ENCODE measurements at regions of chr18 and their contacts with region 1.

Region 1: DNA sequence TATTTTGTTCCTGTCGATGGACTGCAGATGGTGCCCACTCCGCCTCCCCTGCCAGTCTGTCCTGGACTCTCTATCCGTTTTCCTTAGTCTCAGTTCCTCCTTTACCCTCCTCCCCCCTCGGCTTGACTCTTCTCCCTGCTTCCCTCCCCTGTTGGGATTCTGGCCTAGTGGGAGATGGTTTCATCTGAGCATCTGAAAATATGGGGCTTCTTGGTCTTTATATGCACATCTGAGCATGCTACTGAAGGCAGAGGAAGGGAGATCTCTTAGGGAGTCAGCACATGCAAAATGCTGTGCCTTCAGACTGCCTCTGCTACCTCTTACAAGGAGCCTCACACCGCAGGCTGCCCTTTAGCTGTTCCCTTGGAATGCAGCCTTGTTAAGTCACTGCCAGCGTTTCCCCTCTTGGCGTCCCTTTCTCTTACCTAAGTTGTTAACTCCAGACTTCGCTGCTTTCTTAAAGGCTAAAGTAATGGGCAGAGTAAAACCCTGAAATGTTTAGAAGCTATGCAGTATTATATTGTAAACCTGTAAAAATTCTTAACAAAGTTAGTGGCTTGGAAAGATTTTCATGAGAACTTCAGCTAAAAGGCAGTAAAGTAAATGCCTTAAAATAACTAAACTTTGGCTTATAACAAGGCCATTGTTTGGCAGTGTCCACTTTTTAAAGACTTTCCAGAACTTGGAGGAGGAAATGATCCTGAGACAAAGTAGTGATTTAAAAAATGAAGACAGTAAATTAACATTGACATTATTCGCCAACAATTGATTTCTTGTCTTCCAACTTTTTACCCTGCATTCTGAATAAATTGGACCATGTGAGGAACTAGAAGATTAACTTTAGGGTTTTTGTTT is 49.8 kb downstream of the LDLRAD4 start:
- DNase-seq: no peak
- H3K4me3 Mint-ChIP-seq: peak overlapping the region; percentile 7
- H3K27ac Mint-ChIP-seq: peak overlapping the region; percentile 92
- H3K4me1 Mint-ChIP-seq: peaks cover 71% of the 10 kb centered on the region
- H3K27me3 Mint-ChIP-seq: peaks cover 12% of the 10 kb centered on the region

Region 2: DNA sequence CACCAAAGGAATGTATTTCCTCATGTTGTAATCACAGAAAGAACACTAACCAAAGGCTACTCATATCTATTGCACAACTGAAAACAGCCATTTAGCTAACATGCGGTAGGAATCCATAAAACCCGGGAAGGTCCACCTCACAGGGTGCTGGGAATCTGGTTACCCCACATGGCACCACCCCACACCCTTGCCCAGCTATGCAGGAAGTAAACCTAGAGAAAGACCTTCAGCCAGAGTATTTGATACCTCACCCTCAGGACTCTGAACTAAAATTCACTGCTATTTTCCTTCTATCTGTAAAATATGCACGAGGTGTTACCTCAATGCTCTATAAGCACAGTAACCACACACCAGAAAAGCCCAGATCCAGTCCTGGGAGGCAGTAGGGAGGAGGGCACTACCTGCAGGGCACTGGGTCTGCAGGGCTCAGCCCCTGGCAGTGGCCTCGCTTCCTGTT is 430.2 kb before region 1 on chr18:
- CTCF ChIA-PET with region 1: no interaction called
- POLR2A ChIA-PET with region 1: no interaction called
- intact Hi-C with region 1: loop called (anchors 5 kb)
- DNase-seq: peak; percentile 34
- H3K4me3 Mint-ChIP-seq: peak overlapping the region; percentile 45
- H3K27ac Mint-ChIP-seq: peak overlapping the region; percentile 94
- H3K4me1 Mint-ChIP-seq: peaks cover 63% of the 10 kb centered on the region
- H3K27me3 Mint-ChIP-seq: no peaks in the 10 kb centered on the region

Region 3: DNA sequence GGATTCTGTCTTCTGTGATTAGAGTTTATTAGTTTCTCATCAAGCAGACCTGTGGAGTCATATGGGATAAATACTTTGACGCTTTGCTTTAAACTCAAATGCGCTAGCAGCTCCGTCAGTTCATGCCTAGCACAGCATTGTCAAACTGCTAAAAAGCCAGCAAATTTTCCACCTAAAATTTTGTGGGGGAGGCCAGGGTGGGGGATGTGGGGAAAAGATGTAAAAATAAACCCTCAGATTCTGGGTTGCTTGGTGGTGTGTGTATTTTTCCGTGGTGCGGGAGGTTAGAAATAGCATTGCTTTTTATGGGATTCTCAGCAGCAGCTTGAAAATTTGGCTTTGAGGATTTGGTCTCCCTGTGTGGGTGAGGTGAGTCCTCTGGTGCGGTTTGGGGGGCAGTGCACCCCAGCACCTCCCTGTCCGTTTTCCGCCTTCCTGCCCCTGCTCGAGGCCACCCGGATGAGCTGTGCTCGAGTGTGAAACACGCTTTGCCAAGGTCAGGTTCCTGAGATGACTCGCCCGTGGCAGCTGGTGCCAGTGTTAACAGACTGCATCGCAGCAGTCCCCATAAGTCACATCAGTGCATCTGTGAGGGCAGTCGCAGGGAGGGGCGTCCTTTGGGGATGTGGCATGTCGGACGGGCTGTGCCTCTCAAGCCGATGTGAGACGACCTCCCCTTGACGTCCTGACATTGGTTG is 16.1 kb after region 1 on chr18:
- CTCF ChIA-PET with region 1: interaction called, 8 read pairs
- POLR2A ChIA-PET with region 1: interaction called, 42 read pairs
- intact Hi-C with region 1: loop called (anchors 1 kb)
- DNase-seq: peak; percentile 83
- H3K4me3 Mint-ChIP-seq: peak overlapping the region; percentile 11
- H3K27ac Mint-ChIP-seq: peak overlapping the region; percentile 39
- H3K4me1 Mint-ChIP-seq: peaks cover 68% of the 10 kb centered on the region
- H3K27me3 Mint-ChIP-seq: peaks cover 9% of the 10 kb centered on the region

Region 4: DNA sequence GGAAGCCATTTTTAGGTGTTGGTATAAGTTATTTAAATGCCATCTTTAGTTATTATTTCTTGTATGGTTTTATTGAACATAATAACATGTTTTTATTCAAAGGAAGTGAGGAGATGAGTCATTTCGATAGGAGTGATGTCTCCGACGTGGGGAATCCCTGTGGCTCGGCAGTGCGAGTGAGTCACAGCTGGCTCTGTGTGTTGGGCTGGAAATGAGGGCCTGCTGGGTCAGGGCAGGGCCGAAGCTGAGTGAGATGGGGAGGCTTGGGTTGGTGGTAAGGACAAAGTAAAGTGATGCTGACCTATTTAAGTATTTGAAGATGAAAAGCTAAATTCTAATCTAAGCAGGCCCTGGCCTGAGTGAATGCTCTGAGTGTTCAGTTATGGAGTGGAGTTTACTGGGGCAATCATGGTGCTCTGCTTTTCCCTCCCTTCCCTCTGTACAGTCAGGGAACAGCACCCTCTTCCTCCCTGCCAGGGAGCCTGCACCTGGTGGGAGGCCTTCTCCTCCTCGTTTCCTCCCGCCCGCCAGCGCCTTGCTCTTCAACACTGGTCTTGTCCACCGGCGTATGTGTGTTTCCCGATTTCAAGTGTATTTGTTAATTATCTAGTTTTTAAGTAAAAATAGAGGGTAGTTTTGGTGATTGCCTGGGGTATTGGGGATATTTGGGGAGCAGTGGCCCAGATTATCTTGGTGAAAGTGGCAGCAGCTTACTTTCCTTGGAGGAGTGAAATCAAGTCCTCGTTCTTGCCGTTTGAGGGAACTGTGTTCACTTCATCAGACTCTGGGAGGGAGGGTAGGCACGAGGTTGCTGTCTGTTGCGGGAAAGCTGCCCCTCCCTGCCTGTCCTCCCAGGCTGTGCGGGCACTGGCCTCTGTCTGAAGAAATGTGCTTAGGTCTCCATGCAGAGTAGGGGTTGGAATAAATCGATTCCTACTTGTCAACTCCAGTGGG is 107.2 kb after region 1 on chr18:
- CTCF ChIA-PET with region 1: interaction called, 3 read pairs
- POLR2A ChIA-PET with region 1: interaction called, 23 read pairs
- intact Hi-C with region 1: loop called (anchors 1 kb)
- DNase-seq: peak; percentile 92
- H3K4me3 Mint-ChIP-seq: peak overlapping the region; percentile 49
- H3K27ac Mint-ChIP-seq: peak overlapping the region; percentile 97
- H3K4me1 Mint-ChIP-seq: peaks cover 79% of the 10 kb centered on the region
- H3K27me3 Mint-ChIP-seq: no peaks in the 10 kb centered on the region

Region 5: DNA sequence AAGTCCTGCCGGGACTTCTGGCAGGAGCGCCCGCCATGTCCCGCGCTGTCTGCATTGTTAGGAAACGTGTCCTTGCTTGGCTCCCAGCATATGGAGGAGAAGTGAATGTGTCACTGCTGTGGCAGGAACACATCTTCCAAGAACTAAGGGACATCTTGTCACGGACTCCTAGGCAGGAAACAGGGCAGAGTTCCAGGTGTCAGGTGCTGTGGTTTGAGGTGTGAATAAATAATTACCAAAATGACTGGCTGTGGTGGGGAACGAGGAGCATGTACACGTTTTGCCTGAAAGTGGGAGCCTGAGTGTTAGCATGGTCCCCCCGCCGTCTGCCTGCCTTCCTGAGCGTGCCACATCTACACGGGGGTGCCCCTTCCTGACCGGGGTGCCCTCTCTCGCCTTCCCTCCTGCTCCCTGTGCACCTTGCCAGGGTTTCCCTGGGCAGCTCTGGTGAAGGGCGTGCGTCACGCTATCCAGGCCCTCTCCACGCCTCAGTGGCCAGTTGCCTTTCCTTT is 187.6 kb after region 1 on chr18:
- CTCF ChIA-PET with region 1: no interaction called
- POLR2A ChIA-PET with region 1: no interaction called
- intact Hi-C with region 1: loop called (anchors 5 kb)
- DNase-seq: peak; percentile 77
- H3K4me3 Mint-ChIP-seq: peak overlapping the region; percentile 33
- H3K27ac Mint-ChIP-seq: peak overlapping the region; percentile 23
- H3K4me1 Mint-ChIP-seq: peaks cover 31% of the 10 kb centered on the region
- H3K27me3 Mint-ChIP-seq: no peaks in the 10 kb centered on the region

Region 6: DNA sequence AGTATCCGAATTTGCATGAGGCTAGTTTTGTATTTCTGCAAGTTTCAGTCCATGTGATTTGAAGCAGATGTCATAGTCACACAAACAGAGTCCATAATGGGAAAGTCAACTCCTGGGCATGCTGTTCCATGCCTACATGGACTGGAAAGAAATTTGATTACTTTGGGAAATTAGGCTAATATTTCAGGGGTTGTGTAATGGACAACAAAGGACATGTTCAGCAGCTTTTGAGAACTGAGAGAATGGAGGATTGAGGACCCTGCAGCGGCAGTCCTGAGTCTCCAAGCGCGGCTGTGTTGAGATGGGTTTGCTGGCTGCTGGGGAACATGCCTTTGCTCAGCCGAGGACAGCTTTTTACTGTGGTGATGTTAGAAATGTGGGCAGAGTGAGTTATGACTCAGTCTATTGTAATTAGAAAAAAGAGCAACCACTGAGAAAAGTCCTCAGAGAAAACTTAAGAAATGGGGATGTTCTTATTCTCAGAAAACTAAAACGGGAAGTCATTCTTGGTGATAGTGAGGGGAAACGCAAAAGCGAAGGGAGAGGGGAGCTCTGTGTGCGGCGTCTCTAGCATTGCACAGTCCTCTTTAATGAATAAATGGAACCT is 308.8 kb after region 1 on chr18:
- CTCF ChIA-PET with region 1: interaction called, 3 read pairs
- POLR2A ChIA-PET with region 1: no interaction called
- intact Hi-C with region 1: loop called (anchors 5 kb)
- DNase-seq: peak; percentile 70
- H3K4me3 Mint-ChIP-seq: peak overlapping the region; percentile 31
- H3K27ac Mint-ChIP-seq: peak overlapping the region; percentile 52
- H3K4me1 Mint-ChIP-seq: peaks cover 45% of the 10 kb centered on the region
- H3K27me3 Mint-ChIP-seq: no peaks in the 10 kb centered on the region

Region 7: GRCh38 chr18:13726232-13726971 is 458.0 kb after region 1 on chr18 and contains the starts of genes FAM210A and RNMT:
- CTCF ChIA-PET with region 1: no interaction called
- POLR2A ChIA-PET with region 1: no interaction called
- intact Hi-C with region 1: loop called (anchors 5 kb)
- DNase-seq: peak; percentile 96
- H3K4me3 Mint-ChIP-seq: peak within 1 kb of the TSS; percentile 83
- H3K27ac Mint-ChIP-seq: peak within 1 kb of the TSS; percentile 89
- H3K4me1 Mint-ChIP-seq: peaks cover 61% of the 10 kb centered on the region
- H3K27me3 Mint-ChIP-seq: no peaks in the 10 kb centered on the region
- total RNA-seq, gene FAM210A: 24.9 to 29.4 TPM
- total RNA-seq, gene RNMT: 41.2 to 43.6 TPM